ENCODE measurements at regions of chr7 and their contacts with region 1.

Region 1: DNA sequence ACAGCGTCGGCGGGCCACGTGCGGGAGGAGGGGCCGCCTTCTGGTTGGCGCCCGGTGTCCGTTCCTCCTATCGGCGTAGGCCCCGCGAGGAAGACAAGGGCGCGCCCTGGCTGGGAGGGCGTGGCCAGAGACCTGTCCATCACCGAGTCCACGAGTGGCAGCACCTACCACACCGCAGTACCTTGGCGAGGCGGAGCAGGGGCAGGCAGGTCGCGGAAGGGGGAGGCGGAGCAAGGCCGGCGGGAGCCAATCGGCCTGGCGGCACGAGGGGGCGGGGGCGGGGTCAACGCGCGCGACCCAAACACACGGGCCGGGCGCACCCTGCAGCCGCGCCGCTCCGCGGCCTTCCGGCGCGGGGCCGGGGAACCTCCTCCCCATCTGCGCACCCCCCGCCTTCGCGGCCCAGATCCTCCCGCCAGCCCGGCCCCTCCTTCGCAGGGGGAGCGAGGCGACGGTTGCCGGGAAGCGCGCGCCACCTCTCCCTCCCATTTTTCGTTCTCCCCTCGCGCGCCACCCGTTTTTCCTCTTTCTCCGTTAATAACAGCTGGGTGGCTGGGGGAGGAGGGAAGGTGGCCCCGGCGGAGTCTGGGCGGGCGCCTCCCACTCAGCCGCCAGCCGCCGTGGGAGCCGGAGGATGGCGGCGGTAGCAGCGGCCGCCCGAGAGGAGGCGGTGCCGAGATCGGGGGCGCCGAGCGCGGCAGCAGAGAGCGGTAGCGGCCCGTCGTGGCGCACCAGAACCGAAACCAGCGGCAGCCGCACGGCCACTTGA is at the start of gene ZNRF2:
- DNase-seq: peak; percentile 98 to 99
- H3K4me3 ChIP-seq: peak within 1 kb of the TSS; percentile 91 to 97
- H3K27ac ChIP-seq: peak within 1 kb of the TSS; percentile 98 to 99
- H3K4me1 ChIP-seq: peaks cover 0 to 4% of the 10 kb centered on the region in 2 donors
- H3K27me3 ChIP-seq: no peaks in the 10 kb centered on the region
- CTCF ChIP-seq: peak; percentile 25 to 71 (median 54)
- POLR2A ChIP-seq: peak; percentile 76 to 77
- total RNA-seq, gene ZNRF2: 22.0 to 40.6 (median 27.3) TPM

Region 2: GRCh38 chr7:30412810-30413504 is 128.5 kb after region 1 on chr7:
- intact Hi-C with region 1: loop called (anchors 5 kb)
- DNase-seq: peak in 1 of 2 donors; percentile 49
- H3K4me3 ChIP-seq: no peak overlapping the region
- H3K27ac ChIP-seq: no peak overlapping the region
- H3K4me1 ChIP-seq: no peaks in the 10 kb centered on the region
- H3K27me3 ChIP-seq: no peaks in the 10 kb centered on the region
- CTCF ChIP-seq: peak; percentile 44 to 83 (median 64)
- POLR2A ChIP-seq: no peak